HepG2 (cell line): ENCODE measurements at regions of chr1 and their contacts with region 1.

Region 1: GRCh38 chr1:169348383-169349036 is 19.1 kb downstream of the NME7 start:
- DNase-seq: peak; percentile 43
- ATAC-seq: no peak
- H3K4me3 ChIP-seq: no peak overlapping the region
- H3K27ac ChIP-seq: no peak overlapping the region
- H3K4me1 ChIP-seq: peaks cover 14% of the 10 kb centered on the region
- H3K27me3 ChIP-seq: no peaks in the 10 kb centered on the region
- CTCF ChIP-seq: peak; percentile 79
- EP300 ChIP-seq: no peak
- POLR2A ChIP-seq: no peak
- RAD21 ChIP-seq: peak; percentile 71

Region 2: DNA sequence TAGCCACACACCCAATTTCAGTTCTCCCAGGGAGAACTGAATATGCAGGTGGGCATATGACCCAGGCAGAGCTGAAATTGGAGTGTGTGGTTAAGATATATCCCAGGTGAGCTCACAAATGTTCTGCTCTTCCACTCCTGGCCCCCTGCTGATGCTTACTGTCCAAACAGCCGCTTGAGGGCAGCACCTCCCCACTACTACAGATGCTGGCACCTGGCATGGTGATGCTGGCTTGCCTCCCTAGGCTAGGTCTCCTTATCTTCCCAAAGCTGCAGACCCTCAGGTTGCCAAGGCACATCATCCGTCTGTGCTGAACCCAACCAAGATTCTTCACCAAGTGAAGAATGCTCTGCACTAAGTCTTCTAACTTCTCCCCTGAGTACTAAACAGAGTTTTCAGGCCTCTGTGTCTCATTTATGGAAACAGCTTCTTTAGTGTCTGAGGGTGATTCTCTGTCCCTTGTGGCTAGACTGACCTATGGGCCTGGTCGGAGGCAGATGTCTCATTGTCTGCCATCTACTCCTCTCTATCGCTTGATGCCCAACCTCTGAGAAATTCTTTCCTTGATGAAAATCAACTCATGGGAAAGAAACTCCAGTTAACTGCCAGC is 744.9 kb before region 1 on chr1:
- CTCF ChIA-PET with region 1: interaction called, 13 read pairs
- POLR2A ChIA-PET with region 1: interaction called, 3 read pairs
- in situ Hi-C with region 1: no loop called
- intact Hi-C with region 1: loop called (anchors 1 kb)
- DNase-seq: peak; percentile 60
- ATAC-seq: peak; percentile 99
- H3K4me3 ChIP-seq: no peak overlapping the region
- H3K27ac ChIP-seq: no peak overlapping the region
- H3K4me1 ChIP-seq: no peaks in the 10 kb centered on the region
- H3K27me3 ChIP-seq: no peaks in the 10 kb centered on the region; a peak in 1 of 5 replicates
- CTCF ChIP-seq: peak; percentile 96
- EP300 ChIP-seq: no peak
- POLR2A ChIP-seq: no peak
- RAD21 ChIP-seq: peak; percentile 96

Region 3: GRCh38 chr1:168613691-168614231 is 734.7 kb before region 1 on chr1:
- CTCF ChIA-PET with region 1: no interaction called
- POLR2A ChIA-PET with region 1: no interaction called
- in situ Hi-C with region 1: loop called (anchors 5 kb)
- intact Hi-C with region 1: no loop called
- DNase-seq: no peak
- ATAC-seq: no peak; the same call in 2 of the 3 replicates
- H3K4me3 ChIP-seq: no peak overlapping the region
- H3K27ac ChIP-seq: no peak overlapping the region
- H3K4me1 ChIP-seq: no peaks in the 10 kb centered on the region
- H3K27me3 ChIP-seq: peaks cover 0 to 9% of the 10 kb centered on the region in 2 experiments; a peak in 2 of 5 replicates
- CTCF ChIP-seq: no peak
- EP300 ChIP-seq: no peak
- POLR2A ChIP-seq: no peak
- RAD21 ChIP-seq: no peak

Region 4: DNA sequence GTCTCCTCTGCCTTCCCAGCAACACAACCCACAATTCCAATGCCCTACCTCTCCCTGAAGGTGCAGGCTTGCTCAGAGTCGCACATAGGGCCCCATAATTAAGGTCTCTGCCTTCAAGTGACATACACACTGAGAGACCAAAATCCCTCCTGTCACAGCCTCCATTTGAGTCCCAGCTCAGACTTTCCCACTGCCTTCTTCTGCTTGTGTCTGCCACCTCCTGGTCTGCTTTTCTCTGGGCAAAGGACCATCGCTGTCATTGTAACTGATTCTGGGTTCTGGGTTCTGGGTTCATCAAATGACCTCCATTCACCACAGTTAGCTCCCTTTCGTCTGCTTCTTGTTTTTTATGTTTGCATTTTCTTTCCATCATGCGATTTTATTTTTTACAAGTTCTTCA is 361.2 kb before region 1 on chr1:
- CTCF ChIA-PET with region 1: interaction called, 3 read pairs
- POLR2A ChIA-PET with region 1: no interaction called
- in situ Hi-C with region 1: no loop called
- intact Hi-C with region 1: loop called (anchors 5 kb)
- DNase-seq: no peak
- ATAC-seq: peak; percentile 66
- H3K4me3 ChIP-seq: no peak overlapping the region
- H3K27ac ChIP-seq: no peak overlapping the region
- H3K4me1 ChIP-seq: no peaks in the 10 kb centered on the region
- H3K27me3 ChIP-seq: no peaks in the 10 kb centered on the region
- CTCF ChIP-seq: peak; percentile 64
- EP300 ChIP-seq: no peak
- POLR2A ChIP-seq: no peak
- RAD21 ChIP-seq: no peak

Region 5: DNA sequence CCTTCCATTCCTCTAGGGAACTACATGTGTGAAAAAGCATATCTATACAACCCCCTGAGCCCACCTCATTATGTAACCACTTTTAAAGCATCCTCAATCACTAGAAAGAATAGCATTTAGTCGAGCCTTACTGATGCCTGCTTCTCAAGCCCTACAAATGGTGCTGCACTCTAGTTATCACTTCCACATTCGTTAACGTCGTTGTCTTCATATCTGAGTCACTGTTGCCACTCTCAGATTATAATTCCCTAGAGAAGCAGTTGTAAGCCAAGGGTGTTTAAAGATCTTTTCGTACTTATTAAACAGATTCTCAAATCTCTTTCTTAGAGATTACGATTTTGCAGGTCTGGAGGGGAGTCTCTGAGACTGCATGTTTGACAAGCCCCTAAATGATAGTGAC is 225.5 kb before region 1 on chr1:
- CTCF ChIA-PET with region 1: no interaction called
- POLR2A ChIA-PET with region 1: no interaction called
- in situ Hi-C with region 1: loop called (anchors 10 kb)
- intact Hi-C with region 1: no loop called
- DNase-seq: no peak
- ATAC-seq: no peak
- H3K4me3 ChIP-seq: no peak overlapping the region
- H3K27ac ChIP-seq: no peak overlapping the region
- H3K4me1 ChIP-seq: peaks cover 38% of the 10 kb centered on the region
- H3K27me3 ChIP-seq: no peaks in the 10 kb centered on the region
- CTCF ChIP-seq: no peak
- EP300 ChIP-seq: no peak
- POLR2A ChIP-seq: no peak
- RAD21 ChIP-seq: no peak

Region 6: DNA sequence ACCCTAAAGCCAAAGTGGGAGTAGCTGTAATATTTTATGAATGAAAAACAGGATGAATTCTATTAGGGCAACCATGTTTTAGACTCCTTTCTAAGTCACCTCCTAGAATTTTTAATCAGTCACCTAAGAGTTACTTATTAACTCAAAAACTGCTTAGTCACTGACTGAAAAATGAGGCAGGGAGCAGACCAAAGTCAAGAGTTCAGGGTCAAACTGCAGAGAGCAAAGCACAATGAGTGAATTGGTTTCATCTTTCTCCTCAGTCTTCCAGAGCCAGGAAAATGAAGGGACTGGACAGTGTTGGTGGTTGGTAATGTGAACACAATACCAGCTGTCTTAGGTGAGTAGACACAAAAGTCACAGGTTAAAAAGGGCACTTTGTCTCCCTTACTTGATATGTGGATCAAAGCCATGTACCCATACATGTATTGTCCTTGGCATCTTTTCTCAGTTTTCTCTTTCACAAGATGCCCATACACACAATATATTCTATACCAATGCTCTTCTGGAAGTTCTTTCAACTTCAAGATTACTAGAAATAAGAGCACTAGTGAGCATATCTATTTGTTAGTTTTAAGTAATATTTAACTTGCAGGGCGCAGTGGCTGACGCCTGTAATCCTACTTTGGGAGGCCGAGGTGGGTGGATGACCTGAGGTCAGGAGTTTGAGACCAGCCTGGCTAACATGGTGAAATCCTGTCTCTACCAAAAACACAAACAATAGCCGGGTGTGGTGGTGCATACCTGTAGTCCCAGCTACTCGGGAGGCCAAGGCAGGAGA is 199.8 kb before region 1 on chr1:
- CTCF ChIA-PET with region 1: no interaction called
- POLR2A ChIA-PET with region 1: no interaction called
- in situ Hi-C with region 1: no loop called
- intact Hi-C with region 1: loop called (anchors 5 kb)
- DNase-seq: peak; percentile 97
- ATAC-seq: peak; percentile 87
- H3K4me3 ChIP-seq: peak overlapping the region in 1 of 3 experiments; percentile 1; a peak in 1 of 6 replicates
- H3K27ac ChIP-seq: peak overlapping the region; percentile 95
- H3K4me1 ChIP-seq: peaks cover 77% of the 10 kb centered on the region
- H3K27me3 ChIP-seq: no peaks in the 10 kb centered on the region
- CTCF ChIP-seq: no peak
- EP300 ChIP-seq: peak; percentile 87 to 97
- POLR2A ChIP-seq: peak in 1 of 2 experiments; percentile 28; a peak in 2 of 4 replicates
- RAD21 ChIP-seq: no peak

Region 7: GRCh38 chr1:169271098-169271497 is 77.4 kb before region 1 on chr1:
- CTCF ChIA-PET with region 1: no interaction called
- POLR2A ChIA-PET with region 1: no interaction called
- in situ Hi-C with region 1: no loop called
- intact Hi-C with region 1: loop called (anchors 1 kb)
- DNase-seq: no peak
- ATAC-seq: no peak; the same call in 2 of the 3 replicates
- H3K4me3 ChIP-seq: no peak overlapping the region
- H3K27ac ChIP-seq: no peak overlapping the region
- H3K4me1 ChIP-seq: peaks cover 12% of the 10 kb centered on the region
- H3K27me3 ChIP-seq: no peaks in the 10 kb centered on the region
- CTCF ChIP-seq: no peak; the same call in 1 of the 2 replicates
- EP300 ChIP-seq: no peak
- POLR2A ChIP-seq: no peak
- RAD21 ChIP-seq: no peak